Activated CD4-positive, alpha-beta memory T cell treated with anti-CD3 and anti-CD28 coated beads for 36 hours (primary cell): ENCODE measurements at regions of chr19 and their contacts with region 1.

Region 1: DNA sequence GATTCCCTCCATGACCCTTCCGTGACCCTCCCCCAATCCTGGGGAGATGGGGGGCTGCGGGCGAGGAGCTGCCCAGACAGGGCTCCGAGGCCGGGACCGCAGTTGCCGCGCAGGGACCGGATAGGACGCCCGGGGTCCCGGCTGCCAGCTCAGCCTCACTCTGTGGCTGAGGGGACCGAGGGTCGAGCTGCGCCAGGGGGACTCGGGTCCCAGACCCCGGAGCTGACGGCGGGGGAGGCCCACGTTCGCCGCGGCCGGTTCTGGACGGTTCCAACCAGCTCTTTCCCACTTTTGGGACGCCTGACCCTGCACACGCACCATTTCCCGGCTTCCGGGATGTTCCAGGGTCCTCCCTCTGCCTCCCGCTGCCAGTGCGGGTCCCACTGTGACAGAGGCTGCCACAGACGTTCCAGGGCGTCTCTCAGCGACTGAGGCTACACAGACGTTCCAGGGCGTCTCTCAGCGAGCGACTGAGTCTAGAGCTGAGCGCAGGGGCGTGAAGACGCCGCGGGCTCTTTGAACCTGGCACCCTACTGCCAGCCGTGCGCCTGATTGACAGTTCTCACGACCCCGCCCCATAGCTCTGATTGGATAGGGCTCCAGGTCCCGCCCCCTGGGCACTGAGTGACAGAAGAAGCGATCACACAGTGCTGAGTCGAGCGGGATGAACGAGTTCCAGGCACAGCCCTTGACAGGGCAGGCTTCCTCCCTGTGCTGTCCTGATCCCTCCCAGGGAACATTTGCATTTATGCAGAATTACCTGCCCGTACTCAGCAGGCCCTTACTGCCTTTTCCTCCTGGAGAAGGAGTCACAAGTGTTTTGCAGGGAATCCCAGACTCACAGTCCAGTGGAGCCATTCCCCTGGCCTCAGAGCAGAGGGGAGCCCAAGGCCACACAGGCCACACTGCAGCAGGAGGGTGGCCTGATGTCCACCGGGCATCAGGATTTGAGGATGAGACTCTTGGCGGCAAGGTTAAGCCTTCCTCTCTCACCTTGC is at the start of gene ZNF563:
- DNase-seq: peak; percentile 100
- H3K4me3 Mint-ChIP-seq: peak within 1 kb of the TSS; percentile 98
- H3K27ac Mint-ChIP-seq: peak within 1 kb of the TSS; percentile 97
- H3K4me1 Mint-ChIP-seq: peaks cover 35% of the 10 kb centered on the region
- H3K27me3 Mint-ChIP-seq: no peaks in the 10 kb centered on the region
- total RNA-seq, gene ZNF563: 6.1 to 6.3 TPM

Region 2: DNA sequence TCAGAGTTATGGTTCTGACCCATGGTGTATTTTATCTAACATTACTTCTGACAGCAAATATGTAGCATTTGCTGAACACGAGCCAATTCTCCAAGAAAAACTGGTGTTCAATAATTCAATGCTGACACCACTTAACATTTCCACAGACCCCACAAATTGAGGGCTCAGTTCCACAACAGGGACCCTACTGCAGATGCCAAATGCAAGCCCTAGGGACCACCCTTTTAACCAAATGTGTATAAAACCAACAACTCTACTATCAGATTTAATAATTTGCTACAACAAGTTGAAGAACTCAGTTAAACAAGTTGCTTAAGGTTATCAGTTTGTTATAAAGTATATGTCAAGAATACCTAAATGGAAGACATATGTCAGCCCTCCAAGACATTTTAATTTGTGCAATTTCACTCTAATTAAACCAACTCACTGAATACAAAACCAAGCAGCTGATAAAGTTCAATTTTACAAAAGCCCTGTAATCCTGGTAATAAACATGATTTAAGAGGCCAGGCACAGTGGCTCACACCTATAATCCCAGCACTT is 45.4 kb before region 1 on chr19:
- CTCF ChIA-PET with region 1: interaction called, 3 read pairs
- POLR2A ChIA-PET with region 1: interaction called, 8 read pairs
- intact Hi-C with region 1: loop called (anchors 1 kb)
- DNase-seq: no peak
- H3K4me3 Mint-ChIP-seq: no peak overlapping the region
- H3K27ac Mint-ChIP-seq: peak overlapping the region; percentile 28
- H3K4me1 Mint-ChIP-seq: peaks cover 41% of the 10 kb centered on the region
- H3K27me3 Mint-ChIP-seq: no peaks in the 10 kb centered on the region

Region 3: DNA sequence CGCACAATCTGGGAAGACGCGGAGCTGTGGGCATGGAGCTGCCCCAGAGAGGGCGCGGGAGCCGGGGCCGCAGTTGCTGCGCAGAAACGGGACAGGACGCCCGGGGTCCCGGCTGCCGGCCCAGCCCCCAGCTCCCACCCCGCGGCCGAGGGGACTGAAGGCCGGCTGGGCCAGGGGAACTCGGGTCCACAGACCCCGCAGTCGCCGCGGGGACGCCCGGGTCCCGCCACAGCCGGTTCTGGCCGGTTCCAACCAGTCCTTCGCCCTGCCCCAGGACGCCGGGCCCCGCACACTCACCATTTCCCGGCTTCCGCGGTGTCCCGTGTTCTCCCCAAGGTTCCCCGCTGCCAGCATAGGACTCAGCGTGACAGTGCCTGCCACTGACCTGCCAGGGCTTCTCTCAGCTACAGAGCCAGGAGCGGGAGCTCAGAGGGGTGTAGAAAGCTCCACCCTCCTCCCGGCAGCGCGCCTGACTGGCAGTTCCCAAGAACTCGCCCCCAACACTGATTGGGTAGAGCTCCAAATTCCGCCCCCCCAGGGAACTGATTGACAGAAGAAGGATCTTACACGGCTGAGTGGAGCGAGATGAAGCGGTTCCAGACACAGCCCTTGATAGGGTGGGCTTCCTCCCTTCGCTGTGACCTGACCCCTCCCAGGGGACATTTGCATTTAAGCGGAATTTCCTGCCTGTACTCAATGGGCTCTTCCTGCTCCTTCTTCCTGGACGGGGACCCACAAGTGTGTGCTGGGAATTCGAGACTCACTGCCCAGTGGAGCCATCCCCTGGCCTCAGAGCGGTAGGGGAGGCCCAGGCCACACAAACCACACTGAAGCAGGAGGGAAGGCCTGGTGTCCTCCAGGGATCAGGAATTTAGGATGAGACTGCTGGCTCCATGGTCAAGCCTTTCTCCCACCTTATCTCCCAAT is 32.0 kb after region 1 on chr19 and contains the start of gene ZNF442:
- CTCF ChIA-PET with region 1: interaction called, 11 read pairs
- POLR2A ChIA-PET with region 1: interaction called, 19 read pairs
- intact Hi-C with region 1: loop called (anchors 1 kb)
- DNase-seq: peak; percentile 93
- H3K4me3 Mint-ChIP-seq: peak within 1 kb of the TSS; percentile 93
- H3K27ac Mint-ChIP-seq: peak within 1 kb of the TSS; percentile 65
- H3K4me1 Mint-ChIP-seq: peaks cover 16% of the 10 kb centered on the region
- H3K27me3 Mint-ChIP-seq: peaks cover 2% of the 10 kb centered on the region
- total RNA-seq, gene ZNF442: 2.3 TPM

Region 4: DNA sequence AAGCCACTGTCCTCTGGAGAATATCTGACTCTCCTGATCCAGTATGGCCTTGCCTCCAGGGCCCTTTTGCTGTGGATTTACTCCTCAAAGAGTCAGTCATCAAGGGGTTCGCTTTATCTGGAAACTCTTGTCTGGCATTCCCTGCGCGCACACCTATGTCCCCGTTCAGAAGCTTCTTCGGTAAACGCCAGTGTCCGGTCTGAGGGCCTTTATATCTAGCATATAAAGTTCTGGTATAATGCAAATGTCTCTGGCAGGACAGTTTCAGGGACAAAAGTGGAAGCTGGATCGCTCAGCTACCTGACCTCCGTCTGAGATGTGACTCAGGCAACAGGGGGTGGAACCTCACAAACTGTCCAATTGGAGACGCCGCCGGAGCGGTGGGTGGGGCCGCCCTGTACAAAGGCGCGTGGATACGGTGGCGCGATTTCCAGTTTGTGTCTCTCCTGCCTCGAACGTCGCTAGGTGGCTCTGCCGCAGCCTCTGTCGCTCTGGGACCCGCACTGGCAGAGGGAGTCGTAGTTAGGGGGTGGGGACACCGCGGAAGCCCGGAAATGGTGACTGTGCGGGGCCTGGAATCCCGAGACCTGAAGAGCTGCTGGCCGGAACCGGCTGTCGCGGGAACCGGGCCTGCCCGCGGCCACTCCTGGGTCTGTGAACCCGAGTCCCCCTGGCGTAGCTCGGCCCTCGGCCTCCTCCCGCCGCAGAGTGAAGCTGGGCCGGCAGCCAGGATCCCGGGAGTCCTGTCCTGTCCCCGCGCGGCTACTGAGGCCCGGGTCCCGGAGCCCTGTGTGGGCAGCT is 161.7 kb after region 1 on chr19:
- CTCF ChIA-PET with region 1: no interaction called
- POLR2A ChIA-PET with region 1: no interaction called
- intact Hi-C with region 1: loop called (anchors 10 kb)
- DNase-seq: peak; percentile 98
- H3K4me3 Mint-ChIP-seq: peak overlapping the region; percentile 86
- H3K27ac Mint-ChIP-seq: peak overlapping the region; percentile 88
- H3K4me1 Mint-ChIP-seq: peaks cover 12% of the 10 kb centered on the region
- H3K27me3 Mint-ChIP-seq: no peaks in the 10 kb centered on the region